ENCODE measurements at regions of chrX and their contacts with region 1.

Region 1: GRCh38 chrX:19887911-19888879 is 795 bp upstream of the SH3KBP1 start:
- DNase-seq: peak; percentile 27 to 78
- ATAC-seq: peak; percentile 34 to 38 (median 36)
- H3K4me3 ChIP-seq: peak overlapping the region; percentile 59
- H3K4me3 Mint-ChIP-seq: peak overlapping the region; percentile 83
- H3K27ac ChIP-seq: peak overlapping the region; percentile 55
- H3K27ac Mint-ChIP-seq: peak overlapping the region; percentile 51 to 79
- H3K4me1 ChIP-seq: peaks cover 27% of the 10 kb centered on the region
- H3K4me1 Mint-ChIP-seq: peaks cover 29 to 32% of the 10 kb centered on the region in 2 donors
- H3K27me3 ChIP-seq: no peaks in the 10 kb centered on the region
- H3K27me3 Mint-ChIP-seq: no peaks in the 10 kb centered on the region
- CTCF ChIP-seq: no peak

Region 2: GRCh38 chrX:19496711-19497110 is 391.5 kb before region 1 on chrX:
- intact Hi-C with region 1: no loop called
- DNase-seq: no peak
- ATAC-seq: no peak
- H3K4me3 ChIP-seq: no peak overlapping the region
- H3K4me3 Mint-ChIP-seq: no peak overlapping the region
- H3K27ac ChIP-seq: no peak overlapping the region
- H3K27ac Mint-ChIP-seq: no peak overlapping the region
- H3K4me1 ChIP-seq: no peaks in the 10 kb centered on the region
- H3K4me1 Mint-ChIP-seq: no peaks in the 10 kb centered on the region
- H3K27me3 ChIP-seq: no peaks in the 10 kb centered on the region
- H3K27me3 Mint-ChIP-seq: peaks cover 0 to 4% of the 10 kb centered on the region in 2 donors
- CTCF ChIP-seq: no peak

Region 3: DNA sequence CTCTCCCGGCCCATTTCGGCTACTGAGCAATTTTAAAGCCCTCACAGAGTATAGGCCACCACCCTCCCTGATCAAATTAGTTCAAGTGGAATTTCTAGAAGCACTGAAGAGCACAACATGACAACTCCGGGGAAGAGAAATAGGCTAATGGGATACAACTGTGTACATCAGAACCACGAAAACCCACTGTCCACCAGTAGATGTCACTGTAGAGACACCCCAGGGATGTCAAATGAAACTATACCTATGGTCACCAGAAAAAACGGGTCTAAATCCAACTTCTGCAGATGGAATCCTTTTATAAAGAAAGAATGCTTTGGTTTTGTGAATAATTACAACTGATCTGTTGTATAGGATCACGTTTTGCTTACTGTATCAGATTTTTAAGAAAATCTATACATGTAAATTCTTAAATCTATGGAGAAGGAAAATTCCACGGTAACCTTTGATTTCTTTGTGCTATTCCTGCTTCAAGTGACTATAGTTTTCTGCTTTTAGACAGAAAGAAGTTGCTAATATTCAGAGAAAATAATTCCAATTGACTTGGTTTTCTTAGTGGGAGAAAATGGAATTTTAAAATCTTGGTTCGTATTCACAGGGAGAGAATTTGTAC is 343.4 kb before region 1 on chrX:
- intact Hi-C with region 1: loop called (anchors 1 kb)
- DNase-seq: peak in 1 of 2 donors; percentile 68
- ATAC-seq: peak; percentile 63 to 79 (median 72)
- H3K4me3 ChIP-seq: no peak overlapping the region
- H3K4me3 Mint-ChIP-seq: no peak overlapping the region
- H3K27ac ChIP-seq: no peak overlapping the region
- H3K27ac Mint-ChIP-seq: peak overlapping the region in 1 of 2 donors; percentile 68
- H3K4me1 ChIP-seq: no peaks in the 10 kb centered on the region
- H3K4me1 Mint-ChIP-seq: peaks cover 8 to 24% of the 10 kb centered on the region in 2 donors
- H3K27me3 ChIP-seq: no peaks in the 10 kb centered on the region
- H3K27me3 Mint-ChIP-seq: no peaks in the 10 kb centered on the region
- CTCF ChIP-seq: peak; percentile 63

Region 4: DNA sequence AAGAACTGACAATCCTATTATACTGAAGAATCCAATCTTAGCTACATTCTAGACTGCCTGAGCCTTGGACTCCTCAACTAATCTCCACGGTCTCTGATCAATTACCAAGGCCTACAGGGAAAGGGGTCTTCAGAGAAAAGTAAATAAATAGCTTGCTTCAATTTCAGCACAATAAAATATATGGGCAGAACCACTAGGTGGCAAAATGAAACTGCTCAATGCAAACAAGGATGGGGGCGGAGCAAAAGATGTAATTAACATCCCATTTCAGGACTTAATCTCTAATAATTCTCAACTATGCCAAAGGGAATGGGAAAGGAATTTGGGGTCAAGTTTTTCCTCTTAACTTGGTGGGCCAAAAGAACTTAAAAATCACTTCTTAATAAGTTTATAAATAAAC is 294.5 kb before region 1 on chrX:
- intact Hi-C with region 1: loop called (anchors 1 kb)
- DNase-seq: peak in 1 of 2 donors; percentile 67
- ATAC-seq: peak in 2 of 3 donors; percentile 38 to 60
- H3K4me3 ChIP-seq: no peak overlapping the region
- H3K4me3 Mint-ChIP-seq: no peak overlapping the region
- H3K27ac ChIP-seq: no peak overlapping the region
- H3K27ac Mint-ChIP-seq: peak overlapping the region; percentile 29 to 64
- H3K4me1 ChIP-seq: no peaks in the 10 kb centered on the region
- H3K4me1 Mint-ChIP-seq: peaks cover 18 to 29% of the 10 kb centered on the region in 2 donors
- H3K27me3 ChIP-seq: no peaks in the 10 kb centered on the region
- H3K27me3 Mint-ChIP-seq: no peaks in the 10 kb centered on the region
- CTCF ChIP-seq: peak; percentile 19

Region 5: GRCh38 chrX:19682712-19683331 is 205.4 kb before region 1 on chrX:
- intact Hi-C with region 1: loop called (anchors 2 kb)
- DNase-seq: peak; percentile 73 to 92
- ATAC-seq: peak; percentile 74 to 91 (median 89)
- H3K4me3 ChIP-seq: no peak overlapping the region
- H3K4me3 Mint-ChIP-seq: peak overlapping the region; percentile 60
- H3K27ac ChIP-seq: peak overlapping the region; percentile 87
- H3K27ac Mint-ChIP-seq: peak overlapping the region; percentile 85 to 98
- H3K4me1 ChIP-seq: peaks cover 44% of the 10 kb centered on the region
- H3K4me1 Mint-ChIP-seq: peaks cover 53 to 67% of the 10 kb centered on the region in 2 donors
- H3K27me3 ChIP-seq: no peaks in the 10 kb centered on the region
- H3K27me3 Mint-ChIP-seq: peaks cover 0 to 6% of the 10 kb centered on the region in 2 donors
- CTCF ChIP-seq: no peak

Region 6: GRCh38 chrX:19739683-19740082 is 148.5 kb before region 1 on chrX:
- intact Hi-C with region 1: loop called (anchors 1 kb)
- DNase-seq: peak; percentile 30 to 74
- ATAC-seq: peak in 2 of 3 donors; percentile 68 to 75
- H3K4me3 ChIP-seq: no peak overlapping the region
- H3K4me3 Mint-ChIP-seq: no peak overlapping the region
- H3K27ac ChIP-seq: no peak overlapping the region
- H3K27ac Mint-ChIP-seq: peak overlapping the region; percentile 71 to 79
- H3K4me1 ChIP-seq: peaks cover 25% of the 10 kb centered on the region
- H3K4me1 Mint-ChIP-seq: peaks cover 52 to 58% of the 10 kb centered on the region in 2 donors
- H3K27me3 ChIP-seq: no peaks in the 10 kb centered on the region
- H3K27me3 Mint-ChIP-seq: no peaks in the 10 kb centered on the region
- CTCF ChIP-seq: peak; percentile 70

Region 7: GRCh38 chrX:19840899-19841648 is 47.1 kb before region 1 on chrX:
- intact Hi-C with region 1: loop called (anchors 5 kb)
- DNase-seq: peak; percentile 44 to 74
- ATAC-seq: peak; percentile 68 to 84 (median 82)
- H3K4me3 ChIP-seq: no peak overlapping the region
- H3K4me3 Mint-ChIP-seq: peak overlapping the region; percentile 67
- H3K27ac ChIP-seq: peak overlapping the region; percentile 39
- H3K27ac Mint-ChIP-seq: peak overlapping the region; percentile 89 to 94
- H3K4me1 ChIP-seq: peaks cover 54% of the 10 kb centered on the region
- H3K4me1 Mint-ChIP-seq: peaks cover 43 to 45% of the 10 kb centered on the region in 2 donors
- H3K27me3 ChIP-seq: no peaks in the 10 kb centered on the region
- H3K27me3 Mint-ChIP-seq: no peaks in the 10 kb centered on the region
- CTCF ChIP-seq: no peak

Region 8: DNA sequence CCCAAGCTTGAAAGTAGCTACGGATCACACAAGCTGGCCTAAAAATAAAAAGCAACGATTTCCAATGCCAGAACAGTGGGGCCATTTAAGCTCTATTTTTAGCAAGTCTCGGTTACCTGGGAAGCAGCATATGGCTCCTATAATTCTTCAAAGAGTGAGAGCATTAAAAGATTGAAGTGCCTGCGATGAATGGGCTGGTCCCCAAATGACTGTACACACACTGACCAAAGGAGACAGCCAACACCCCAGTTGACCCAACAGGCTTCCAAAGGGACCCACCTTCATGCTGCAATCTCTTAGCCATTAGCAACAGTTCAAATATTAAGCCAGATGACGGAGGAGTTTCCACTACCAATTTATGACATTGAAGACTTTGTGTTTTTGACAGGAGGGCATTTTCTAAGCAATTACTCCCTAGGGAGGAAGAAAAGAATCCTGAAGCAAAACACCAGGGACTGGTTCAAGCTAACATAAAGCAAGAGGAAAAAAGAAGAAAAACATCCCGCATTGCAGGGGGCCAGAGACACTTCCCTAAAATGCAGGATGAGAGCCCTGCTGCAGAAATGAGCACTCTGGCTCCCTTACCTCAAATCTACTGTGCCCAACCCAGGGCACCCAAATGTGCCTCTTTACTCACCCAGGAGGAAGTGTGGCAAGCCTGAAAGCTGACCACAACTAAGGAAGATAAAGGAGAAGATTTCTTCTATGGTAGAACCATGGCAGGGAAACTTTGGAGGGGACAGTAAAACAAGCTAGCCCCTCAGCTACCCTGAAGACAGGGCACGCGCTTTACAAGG is 22.4 kb before region 1 on chrX:
- intact Hi-C with region 1: loop called (anchors 2 kb)
- DNase-seq: peak in 1 of 2 donors; percentile 31
- ATAC-seq: peak; percentile 26 to 49 (median 28)
- H3K4me3 ChIP-seq: no peak overlapping the region
- H3K4me3 Mint-ChIP-seq: peak overlapping the region; percentile 59
- H3K27ac ChIP-seq: peak overlapping the region; percentile 67
- H3K27ac Mint-ChIP-seq: peak overlapping the region; percentile 79 to 90
- H3K4me1 ChIP-seq: peaks cover 60% of the 10 kb centered on the region
- H3K4me1 Mint-ChIP-seq: peaks cover 55 to 65% of the 10 kb centered on the region in 2 donors
- H3K27me3 ChIP-seq: no peaks in the 10 kb centered on the region
- H3K27me3 Mint-ChIP-seq: no peaks in the 10 kb centered on the region
- CTCF ChIP-seq: no peak

Measured in natural killer cell (primary cell).